ENCODE measurements at regions of chr15 and their contacts with region 1.

Region 1: GRCh38 chr15:78108299-78109084 is 16.1 kb downstream of the SH2D7 start:
- DNase-seq: peak; percentile 78
- H3K4me3 ChIP-seq: no peak overlapping the region
- H3K27ac ChIP-seq: no peak overlapping the region
- H3K4me1 ChIP-seq: no peaks in the 10 kb centered on the region
- H3K27me3 ChIP-seq: no peaks in the 10 kb centered on the region
- CTCF ChIP-seq: peak; percentile 88 to 98 (median 96)
- POLR2A ChIP-seq: no peak

Region 2: DNA sequence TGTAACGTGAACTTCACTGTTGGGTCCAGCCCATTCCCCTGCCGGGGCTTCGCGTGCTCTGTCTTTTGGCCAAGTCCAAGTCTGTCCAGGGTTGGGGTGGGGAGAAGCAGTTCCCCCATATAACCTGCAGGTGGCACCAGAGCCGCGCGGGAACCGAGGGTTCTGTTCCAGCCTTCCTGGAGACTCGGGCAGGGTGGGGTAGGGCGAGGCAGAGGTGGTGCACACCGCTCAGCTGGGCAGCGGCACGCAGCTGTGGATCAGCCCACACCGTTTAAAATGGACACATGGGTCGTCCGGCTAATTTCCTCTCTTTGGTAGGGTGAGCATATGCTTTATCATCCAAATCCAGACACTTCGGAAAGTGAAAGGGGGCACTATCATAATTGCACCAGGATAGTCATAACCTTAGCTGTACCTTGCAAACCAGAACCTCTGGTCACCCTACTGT is 149.0 kb before region 1 on chr15:
- intact Hi-C with region 1: loop called (anchors 2 kb)
- DNase-seq: peak; percentile 49
- H3K4me3 ChIP-seq: no peak overlapping the region
- H3K27ac ChIP-seq: no peak overlapping the region
- H3K4me1 ChIP-seq: no peaks in the 10 kb centered on the region
- H3K27me3 ChIP-seq: no peaks in the 10 kb centered on the region
- CTCF ChIP-seq: peak; percentile 77 to 96 (median 84)
- POLR2A ChIP-seq: no peak

Region 3: GRCh38 chr15:77966540-77967290 is 141.8 kb before region 1 on chr15:
- intact Hi-C with region 1: loop called (anchors 2 kb)
- DNase-seq: no peak
- H3K4me3 ChIP-seq: no peak overlapping the region
- H3K27ac ChIP-seq: no peak overlapping the region
- H3K4me1 ChIP-seq: no peaks in the 10 kb centered on the region
- H3K27me3 ChIP-seq: no peaks in the 10 kb centered on the region
- CTCF ChIP-seq: peak; percentile 60 to 87 (median 72)
- POLR2A ChIP-seq: no peak

Region 4: GRCh38 chr15:78004919-78005634 is 103.4 kb before region 1 on chr15:
- intact Hi-C with region 1: loop called (anchors 5 kb)
- DNase-seq: peak; percentile 87
- H3K4me3 ChIP-seq: no peak overlapping the region
- H3K27ac ChIP-seq: peak overlapping the region; percentile 70 to 75
- H3K4me1 ChIP-seq: peaks cover 48% of the 10 kb centered on the region
- H3K27me3 ChIP-seq: no peaks in the 10 kb centered on the region
- CTCF ChIP-seq: peak in 2 of 4 experiments; percentile 25 to 27
- POLR2A ChIP-seq: no peak

Region 5: DNA sequence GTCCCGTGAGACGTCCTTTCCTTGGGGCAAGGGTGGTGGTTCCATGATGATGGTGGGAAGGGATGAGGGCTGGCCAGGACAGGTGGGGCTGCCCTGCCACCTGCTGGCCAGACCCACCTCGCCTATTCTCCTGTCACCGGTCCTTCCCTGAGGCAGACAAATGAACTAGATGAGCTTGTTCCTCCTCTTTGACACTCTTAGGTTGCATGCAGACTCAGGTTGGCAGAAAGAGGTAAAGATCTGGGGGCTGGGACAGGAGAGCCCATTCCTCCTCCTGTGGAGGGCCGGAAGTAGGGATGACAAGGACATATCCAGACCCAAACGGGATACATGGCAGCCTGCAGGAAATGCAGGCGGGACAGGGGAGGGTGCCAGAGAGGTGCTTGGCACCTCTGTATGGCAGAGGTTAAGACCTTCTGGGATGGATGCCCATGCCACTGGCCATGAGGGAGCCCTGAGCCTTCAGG is 87.3 kb after region 1 on chr15:
- intact Hi-C with region 1: loop called (anchors 5 kb)
- DNase-seq: peak; percentile 45
- H3K4me3 ChIP-seq: no peak overlapping the region
- H3K27ac ChIP-seq: no peak overlapping the region
- H3K4me1 ChIP-seq: no peaks in the 10 kb centered on the region
- H3K27me3 ChIP-seq: no peaks in the 10 kb centered on the region
- CTCF ChIP-seq: peak; percentile 63 to 89 (median 75)
- POLR2A ChIP-seq: no peak

Region 6: DNA sequence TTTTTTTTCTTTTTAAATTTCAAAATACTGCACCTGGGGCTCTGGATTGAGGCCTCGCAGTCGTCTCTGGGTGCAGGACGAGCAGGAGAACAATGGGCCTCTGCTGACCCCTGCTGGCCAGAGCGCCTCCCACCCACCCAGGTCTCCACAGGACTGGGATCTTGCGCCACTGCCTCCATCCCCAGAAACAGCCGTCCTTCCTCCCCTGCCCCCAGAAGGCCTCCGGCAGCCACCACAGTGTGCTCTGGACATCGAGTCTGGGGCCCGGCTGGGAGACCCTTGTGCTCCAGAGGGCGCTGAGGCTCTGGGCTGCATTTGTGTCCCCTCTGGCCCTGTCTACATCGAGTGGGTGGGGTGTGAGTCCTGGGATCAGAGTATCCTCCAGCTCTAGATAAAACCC is 132.5 kb after region 1 on chr15:
- intact Hi-C with region 1: loop called (anchors 1 kb)
- DNase-seq: peak; percentile 82
- H3K4me3 ChIP-seq: no peak overlapping the region
- H3K27ac ChIP-seq: no peak overlapping the region
- H3K4me1 ChIP-seq: no peaks in the 10 kb centered on the region
- H3K27me3 ChIP-seq: no peaks in the 10 kb centered on the region
- CTCF ChIP-seq: peak; percentile 76 to 91 (median 88)
- POLR2A ChIP-seq: no peak

Region 7: GRCh38 chr15:78374436-78375393 is 266.2 kb after region 1 on chr15:
- intact Hi-C with region 1: no loop called
- DNase-seq: no peak
- H3K4me3 ChIP-seq: no peak overlapping the region
- H3K27ac ChIP-seq: no peak overlapping the region
- H3K4me1 ChIP-seq: no peaks in the 10 kb centered on the region
- H3K27me3 ChIP-seq: no peaks in the 10 kb centered on the region
- CTCF ChIP-seq: no peak
- POLR2A ChIP-seq: no peak

Region 8: DNA sequence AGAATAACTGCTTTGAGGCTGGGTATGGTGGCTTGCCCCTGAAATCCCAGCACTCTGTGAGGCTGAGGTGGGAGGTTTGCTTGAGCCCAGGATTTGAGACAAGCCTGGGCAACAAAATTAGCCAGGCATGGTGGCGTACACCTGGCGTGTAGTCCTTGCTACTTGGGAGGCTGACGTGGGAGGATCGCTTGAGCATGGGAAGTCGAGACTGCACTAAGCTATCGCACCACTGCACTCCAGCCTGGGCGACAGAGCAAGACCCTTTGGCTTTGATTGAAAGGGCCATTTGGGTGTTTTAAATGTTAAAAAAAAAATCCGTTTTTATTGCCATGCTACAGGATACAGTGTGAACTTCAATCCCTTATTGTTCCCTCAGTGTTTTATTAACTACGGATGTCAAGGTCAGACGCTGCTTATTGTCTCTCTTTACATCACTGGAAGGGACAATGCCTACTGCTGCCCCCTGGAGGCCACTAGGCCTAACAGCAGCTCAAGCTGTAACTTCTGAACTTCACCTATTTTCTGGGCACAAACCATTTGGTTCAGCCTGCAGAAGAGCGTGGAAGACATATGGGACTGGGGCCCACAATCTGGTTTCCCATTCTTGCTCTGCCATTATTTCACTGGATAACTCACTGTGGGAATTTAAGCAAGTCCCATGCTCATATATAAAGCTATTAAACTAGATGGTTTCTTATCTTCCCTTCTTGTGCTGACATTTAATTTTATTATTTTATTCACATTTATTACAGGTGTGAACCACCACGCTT is 314.3 kb after region 1 on chr15:
- intact Hi-C with region 1: loop called (anchors 5 kb)
- DNase-seq: peak; percentile 48
- H3K4me3 ChIP-seq: no peak overlapping the region
- H3K27ac ChIP-seq: no peak overlapping the region
- H3K4me1 ChIP-seq: no peaks in the 10 kb centered on the region
- H3K27me3 ChIP-seq: no peaks in the 10 kb centered on the region
- CTCF ChIP-seq: peak; percentile 46 to 84 (median 72)
- POLR2A ChIP-seq: no peak